Activated CD4-positive, alpha-beta T cell treated with anti-CD3 and anti-CD28 coated beads for 36 hours (primary cell): ENCODE measurements at regions of chr16 and their contacts with region 1.

Region 1: DNA sequence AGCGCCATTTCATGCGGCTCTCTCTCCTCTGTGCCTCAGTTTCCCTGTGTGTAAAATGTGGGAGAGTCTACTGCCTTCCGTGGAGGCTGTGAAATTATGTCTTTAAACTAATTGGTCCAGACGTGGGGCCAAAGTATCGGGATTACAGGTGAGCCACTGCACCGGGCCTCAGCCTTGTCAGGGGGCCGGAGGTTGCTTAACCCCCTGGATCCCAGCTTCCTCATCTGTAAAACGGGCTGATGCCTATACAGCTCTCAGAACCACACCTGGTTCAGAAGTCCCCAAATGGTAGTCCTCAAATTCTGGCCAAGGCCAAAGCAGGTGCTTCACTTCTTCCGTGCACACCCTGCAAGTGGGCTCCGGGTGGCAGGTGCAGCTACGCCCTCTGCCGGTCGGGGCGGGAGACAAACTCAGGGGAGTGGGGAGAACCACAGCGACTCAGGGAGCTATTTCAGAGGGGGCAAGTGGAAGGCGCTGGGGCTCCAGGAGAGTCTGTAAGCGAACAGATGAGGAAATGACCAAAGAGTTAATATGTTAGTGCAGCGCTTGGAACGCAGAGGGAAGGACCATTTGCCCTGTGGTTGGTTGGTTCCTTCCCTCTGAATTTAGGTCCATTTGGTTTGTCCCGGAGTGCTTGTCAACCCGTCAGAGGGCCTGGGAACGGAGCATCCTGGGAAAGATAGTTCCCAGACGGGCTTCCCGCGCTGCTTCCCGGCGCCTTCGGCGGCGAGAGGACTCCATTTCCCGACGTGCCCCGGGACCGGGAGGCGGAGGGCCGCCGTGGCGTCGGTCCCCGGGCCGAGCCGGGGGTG is at the start of gene MGRN1:
- DNase-seq: peak; percentile 96
- ATAC-seq: peak; percentile 89
- H3K4me3 Mint-ChIP-seq: peak within 1 kb of the TSS; percentile 99
- H3K27ac Mint-ChIP-seq: peak within 1 kb of the TSS; percentile 100
- H3K4me1 Mint-ChIP-seq: peaks cover 38% of the 10 kb centered on the region
- H3K27me3 Mint-ChIP-seq: no peaks in the 10 kb centered on the region
- total RNA-seq, gene MGRN1: 65.0 to 75.4 TPM

Region 2: DNA sequence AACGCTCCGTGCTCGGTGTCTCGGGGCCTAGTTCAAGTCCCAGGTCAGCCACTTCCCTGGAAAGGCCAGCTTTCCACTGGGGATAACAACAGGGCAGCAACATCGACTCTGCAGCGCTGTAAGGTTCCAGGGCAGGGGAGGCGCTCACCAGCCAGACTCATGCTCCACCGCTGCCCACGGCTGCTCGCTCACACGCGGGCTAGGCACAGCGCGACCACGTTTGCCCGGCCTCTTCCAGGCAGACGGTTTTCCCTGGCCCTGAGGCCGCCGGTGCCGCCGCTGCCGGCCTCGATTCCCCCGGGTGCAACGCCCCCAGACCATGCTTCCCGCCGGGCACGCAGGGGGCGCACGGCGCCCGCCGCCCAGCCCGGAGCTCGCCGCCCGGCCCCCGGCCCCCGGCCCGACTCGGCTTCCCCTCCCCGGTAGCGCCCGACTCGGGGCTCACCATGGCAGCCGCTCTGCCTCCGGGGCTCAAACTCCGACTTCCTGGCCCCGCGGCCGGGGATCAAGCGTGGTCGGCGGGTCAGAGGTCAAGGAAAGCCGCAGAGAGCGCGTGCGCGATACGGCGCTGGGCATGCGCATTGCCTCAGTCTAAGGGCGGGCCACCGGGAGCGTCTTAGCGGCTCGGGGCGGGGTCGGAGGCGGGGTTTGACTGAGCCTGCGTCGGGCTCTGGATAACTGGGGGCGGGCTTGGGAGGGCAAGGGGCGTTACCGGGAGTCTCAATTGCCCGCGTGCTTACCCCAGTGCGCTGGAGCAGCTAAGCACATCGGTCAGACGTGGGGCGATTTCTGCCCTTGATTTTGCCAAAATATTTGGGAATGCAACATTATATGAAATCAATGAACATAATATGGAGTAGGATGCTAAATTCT is 273.2 kb before region 1 on chr16 and contains the start of gene PAM16:
- CTCF ChIA-PET with region 1: no interaction called
- POLR2A ChIA-PET with region 1: no interaction called
- intact Hi-C with region 1: loop called in 1 of 2 experiments (anchors 2 kb)
- DNase-seq: peak; percentile 99
- ATAC-seq: peak; percentile 96
- H3K4me3 Mint-ChIP-seq: peak within 1 kb of the TSS; percentile 89
- H3K27ac Mint-ChIP-seq: peak within 1 kb of the TSS; percentile 88
- H3K4me1 Mint-ChIP-seq: peaks cover 20% of the 10 kb centered on the region
- H3K27me3 Mint-ChIP-seq: no peaks in the 10 kb centered on the region
- total RNA-seq, gene PAM16: 62.8 to 67.8 TPM

Region 3: DNA sequence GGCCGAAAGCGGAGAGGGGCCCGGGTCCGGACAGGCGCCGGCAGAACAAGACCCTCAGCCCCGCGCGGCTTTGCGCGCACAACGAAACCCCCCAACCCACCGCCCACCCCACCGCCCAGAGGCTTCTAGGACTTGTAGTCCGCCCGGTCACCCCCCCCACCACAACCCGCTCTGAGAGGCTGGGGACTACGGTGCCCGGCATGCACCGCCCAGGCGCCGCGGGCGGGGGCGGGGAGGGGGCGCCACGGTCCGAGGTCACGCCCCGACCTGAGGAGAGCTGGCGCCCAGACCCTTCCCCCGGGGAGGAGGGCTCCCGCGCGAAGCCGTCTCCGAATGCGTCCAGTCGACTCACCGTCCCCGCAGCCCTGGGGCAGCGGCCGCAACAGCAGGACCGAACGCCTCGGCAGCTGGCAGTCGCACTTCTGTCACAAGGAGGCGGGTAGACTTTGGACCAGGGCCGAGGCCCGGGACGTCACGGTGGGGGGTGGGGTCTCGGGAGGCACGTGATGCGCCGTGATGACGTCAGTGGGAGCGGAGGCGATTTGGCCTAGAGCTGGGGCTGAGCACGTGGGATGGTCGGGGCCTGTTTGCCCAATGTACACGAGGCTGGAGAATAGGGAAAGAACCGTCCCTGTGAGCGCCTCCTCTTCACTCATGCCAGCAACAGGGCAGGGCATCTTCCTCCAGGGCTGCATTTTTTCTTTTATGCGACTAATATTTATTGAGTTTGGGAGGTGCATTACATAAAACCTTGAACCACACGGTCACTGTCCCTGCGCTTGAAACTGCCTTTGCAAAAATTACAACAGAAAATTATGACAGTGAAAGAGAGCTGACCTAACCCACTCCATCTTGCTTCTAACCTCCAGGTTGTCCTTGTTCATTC is 85.6 kb before region 1 on chr16 and contains the start of gene CDIP1:
- CTCF ChIA-PET with region 1: interaction called, 4 read pairs
- POLR2A ChIA-PET with region 1: no interaction called
- intact Hi-C with region 1: loop called in 1 of 2 experiments (anchors 1 kb)
- DNase-seq: peak; percentile 99
- ATAC-seq: peak; percentile 81
- H3K4me3 Mint-ChIP-seq: peak within 1 kb of the TSS; percentile 75
- H3K27ac Mint-ChIP-seq: peak within 1 kb of the TSS; percentile 63
- H3K4me1 Mint-ChIP-seq: peaks cover 41% of the 10 kb centered on the region
- H3K27me3 Mint-ChIP-seq: no peaks in the 10 kb centered on the region
- total RNA-seq, gene CDIP1: 28.3 to 30.2 TPM

Region 4: DNA sequence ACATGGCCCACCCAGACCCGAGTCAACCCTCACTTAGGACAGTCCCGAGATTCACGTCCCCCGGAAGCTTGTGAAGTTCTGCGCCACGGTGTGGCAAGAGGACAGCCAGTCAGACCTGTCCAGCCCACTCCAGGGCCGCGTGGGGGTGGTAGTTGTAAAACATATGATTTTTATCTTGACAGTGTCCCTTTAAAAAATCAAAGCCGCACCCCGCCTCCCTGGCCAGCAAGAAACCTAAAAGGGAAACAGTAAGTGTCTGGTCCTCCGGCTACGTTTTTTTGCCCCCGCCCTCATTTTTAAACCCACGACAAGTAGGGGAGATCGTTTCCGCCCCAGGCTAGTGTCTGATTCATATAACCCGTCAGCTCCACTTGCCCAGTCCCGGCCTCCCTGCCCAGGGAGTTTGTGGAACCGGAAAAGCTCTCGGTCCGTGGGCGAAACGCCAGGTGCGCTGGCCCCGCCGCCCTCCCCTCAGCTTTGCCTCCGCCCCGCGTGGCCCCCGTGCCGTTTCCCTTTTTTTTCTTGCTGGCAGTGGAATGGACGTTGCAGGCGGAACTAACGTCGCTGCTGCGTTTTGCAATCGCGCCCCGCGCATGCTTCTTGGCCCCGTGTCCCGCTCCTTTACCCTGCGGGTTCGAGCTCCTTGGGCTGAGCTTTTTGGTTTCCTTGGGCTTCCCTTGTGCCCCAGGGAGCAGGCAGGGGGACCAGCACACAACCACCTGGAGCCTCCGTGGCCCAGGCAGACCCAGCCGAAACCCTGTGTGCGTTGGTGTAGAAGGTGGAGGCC is 55.8 kb after region 1 on chr16:
- CTCF ChIA-PET with region 1: no interaction called
- POLR2A ChIA-PET with region 1: no interaction called
- intact Hi-C with region 1: loop called (anchors 2 to 5 kb)
- DNase-seq: peak; percentile 17
- ATAC-seq: no peak
- H3K4me3 Mint-ChIP-seq: no peak overlapping the region
- H3K27ac Mint-ChIP-seq: peak overlapping the region; percentile 31
- H3K4me1 Mint-ChIP-seq: peaks cover 27% of the 10 kb centered on the region
- H3K27me3 Mint-ChIP-seq: no peaks in the 10 kb centered on the region

Region 5: DNA sequence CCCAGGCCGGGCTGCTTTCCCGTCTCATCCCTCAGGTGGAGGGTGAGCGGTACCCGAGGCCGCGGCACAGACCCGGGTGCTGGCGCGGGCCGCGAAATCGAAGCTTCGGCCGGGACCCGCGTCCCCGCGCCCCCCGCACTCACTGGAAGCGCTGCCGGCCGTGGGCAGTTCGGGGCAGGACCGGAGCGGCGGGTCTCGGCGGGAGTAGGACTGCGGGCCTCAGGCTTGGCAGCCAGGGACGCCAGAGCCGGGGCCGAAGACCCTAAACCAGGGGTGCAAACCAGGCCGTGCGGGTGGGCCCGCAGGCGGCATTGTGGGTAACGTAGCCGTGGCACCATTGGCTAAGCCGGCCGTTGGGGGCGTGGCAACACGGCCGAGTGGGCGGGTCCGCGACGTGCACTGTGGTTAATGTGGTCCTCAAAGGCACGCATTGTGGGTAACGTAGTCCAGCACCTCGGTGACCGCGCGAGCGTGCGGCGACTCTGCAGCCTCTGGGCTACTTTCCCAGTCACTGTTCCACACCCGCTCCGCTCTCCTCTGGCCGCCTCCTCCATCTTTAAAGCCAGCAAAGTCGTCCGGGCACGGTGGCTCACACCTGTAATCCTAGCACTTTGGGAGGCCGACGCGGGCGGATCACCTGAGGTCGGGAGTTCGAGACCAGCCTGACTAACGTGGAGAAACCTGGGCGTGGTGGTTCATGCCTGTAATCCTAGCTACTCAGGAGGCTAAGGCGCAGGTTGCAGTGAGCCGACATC is 142.8 kb after region 1 on chr16 and contains the start of gene ZNF500:
- CTCF ChIA-PET with region 1: interaction called, 5 read pairs
- POLR2A ChIA-PET with region 1: no interaction called
- intact Hi-C with region 1: loop called in 1 of 2 experiments (anchors 2 kb)
- DNase-seq: peak; percentile 97
- ATAC-seq: peak; percentile 78
- H3K4me3 Mint-ChIP-seq: peak within 1 kb of the TSS; percentile 89
- H3K27ac Mint-ChIP-seq: peak within 1 kb of the TSS; percentile 91
- H3K4me1 Mint-ChIP-seq: peaks cover 25% of the 10 kb centered on the region
- H3K27me3 Mint-ChIP-seq: no peaks in the 10 kb centered on the region
- total RNA-seq, gene ZNF500: 10.3 to 11.6 TPM

Region 6: DNA sequence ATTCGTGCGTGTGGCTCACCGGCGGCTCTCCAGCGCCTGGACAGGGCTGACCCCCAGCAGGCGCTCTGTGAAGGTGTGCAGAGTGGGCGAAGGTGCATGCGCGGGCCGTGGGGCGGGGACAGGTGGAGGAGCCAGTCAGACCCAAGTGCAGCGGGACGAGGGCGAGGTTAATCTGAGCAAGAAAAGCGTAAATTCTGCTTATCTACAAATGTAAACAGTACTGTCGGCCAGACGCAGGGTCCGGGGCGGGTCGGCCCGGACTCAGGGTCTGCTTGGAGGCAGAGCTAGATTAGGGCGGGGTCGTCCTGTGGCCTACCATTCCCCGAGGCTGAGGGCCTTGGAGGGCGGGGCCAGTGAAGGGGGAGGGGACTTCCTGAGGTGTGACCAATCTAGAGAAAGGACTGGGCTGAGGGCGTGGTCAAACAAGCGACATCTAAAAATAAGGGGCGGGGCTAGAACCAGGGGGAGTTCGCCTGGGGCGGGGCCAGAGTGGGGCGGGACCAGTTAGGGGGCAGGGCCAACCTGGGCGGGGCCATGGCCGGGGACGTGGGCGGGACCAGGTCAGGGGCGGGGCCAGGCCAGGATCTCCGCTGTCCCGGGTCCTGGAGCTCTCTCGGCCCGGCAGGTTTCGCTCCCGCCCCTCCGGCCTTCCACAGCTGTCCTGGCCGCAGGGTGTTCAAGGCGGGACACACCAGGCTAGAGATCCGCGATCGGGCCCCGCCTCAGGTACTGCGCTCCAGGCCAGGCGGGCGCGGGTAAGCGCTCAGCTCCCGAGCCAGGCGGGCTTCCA is 333.7 kb after region 1 on chr16 and contains the start of gene SEC14L5:
- CTCF ChIA-PET with region 1: no interaction called
- POLR2A ChIA-PET with region 1: no interaction called
- intact Hi-C with region 1: loop called in 1 of 2 experiments (anchors 2 kb)
- DNase-seq: peak; percentile 98
- ATAC-seq: peak; percentile 95
- H3K4me3 Mint-ChIP-seq: peak within 1 kb of the TSS; percentile 75
- H3K27ac Mint-ChIP-seq: peak within 1 kb of the TSS; percentile 1
- H3K4me1 Mint-ChIP-seq: peaks cover 12% of the 10 kb centered on the region
- H3K27me3 Mint-ChIP-seq: peaks cover 33% of the 10 kb centered on the region
- total RNA-seq, gene SEC14L5: 0.09 to 0.28 TPM